ENCODE measurements at regions of chrX and their contacts with region 1.

Region 1: GRCh38 chrX:103688946-103689345 is 2.4 kb upstream of the MORF4L2 start:
- DNase-seq: no peak
- H3K4me3 ChIP-seq: no peak overlapping the region
- CTCF ChIP-seq: peak; percentile 36

Region 2: GRCh38 chrX:103711533-103712369 is 22.8 kb after region 1 on chrX:
- CTCF ChIA-PET with region 1: interaction called, 26 read pairs
- POLR2A ChIA-PET with region 1: no interaction called
- DNase-seq: no peak
- H3K4me3 ChIP-seq: no peak overlapping the region
- CTCF ChIP-seq: peak; percentile 55

Region 3: GRCh38 chrX:103774070-103774642 is 85.2 kb after region 1 on chrX:
- CTCF ChIA-PET with region 1: interaction called, 23 read pairs
- POLR2A ChIA-PET with region 1: no interaction called
- DNase-seq: no peak
- H3K4me3 ChIP-seq: no peak overlapping the region
- CTCF ChIP-seq: peak; percentile 36

Region 4: GRCh38 chrX:103817502-103817901 is 128.6 kb after region 1 on chrX:
- CTCF ChIA-PET with region 1: interaction called, 12 read pairs
- POLR2A ChIA-PET with region 1: no interaction called
- DNase-seq: no peak
- H3K4me3 ChIP-seq: no peak overlapping the region
- CTCF ChIP-seq: peak; percentile 8